ENCODE measurements at regions of chr7 and their contacts with region 1.

Region 1: DNA sequence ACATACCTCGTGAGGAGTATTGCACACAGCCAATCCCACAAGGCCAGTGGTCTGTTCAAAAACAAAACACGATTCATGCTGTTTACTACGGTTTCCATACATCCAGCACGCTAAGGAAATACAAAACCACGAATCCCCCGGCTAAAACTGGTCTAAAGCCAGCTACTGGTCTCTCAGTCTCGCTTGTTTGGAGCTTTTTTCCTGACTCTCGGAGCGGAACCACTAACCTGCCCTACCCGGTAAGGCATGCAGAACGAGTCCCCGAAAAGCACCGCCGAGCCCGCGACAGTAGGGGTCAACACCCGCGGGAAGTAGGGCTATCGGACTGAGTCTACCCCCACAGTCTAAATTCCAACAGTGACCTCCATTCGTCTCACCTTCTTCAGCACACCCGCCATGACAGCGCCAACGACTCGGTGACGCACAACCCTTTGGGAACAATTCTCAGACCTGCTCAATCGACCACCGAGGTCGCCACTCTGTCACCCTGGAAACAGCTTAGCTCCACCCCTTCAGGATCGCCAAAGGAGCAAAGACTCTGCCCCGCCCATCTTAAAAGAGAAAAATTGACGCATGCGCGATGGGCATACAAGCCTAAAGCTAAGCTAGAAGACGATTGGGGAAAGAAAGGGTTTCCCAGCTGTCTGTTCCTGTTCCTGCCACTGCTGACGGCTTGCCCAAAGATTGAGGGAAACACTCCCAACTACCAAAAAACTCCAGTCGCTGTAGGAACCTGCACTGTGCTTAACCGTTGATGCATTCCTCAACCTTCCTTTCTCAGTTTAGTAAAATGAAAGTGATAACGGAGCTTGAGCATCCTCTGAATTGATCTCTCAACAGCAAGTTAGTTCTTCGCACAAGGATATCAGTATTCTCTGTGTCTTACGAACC is at the start of gene NDUFA5:
- DNase-seq: peak; percentile 99
- H3K4me3 ChIP-seq: peak within 1 kb of the TSS; percentile 58
- H3K4me3 Mint-ChIP-seq: no peak within 1 kb of the TSS
- H3K27ac Mint-ChIP-seq: no peak within 1 kb of the TSS
- H3K4me1 ChIP-seq: peaks cover 5% of the 10 kb centered on the region; the same call in 1 of the 2 replicates
- H3K4me1 Mint-ChIP-seq: no peaks in the 10 kb centered on the region
- H3K27me3 ChIP-seq: no peaks in the 10 kb centered on the region
- H3K27me3 Mint-ChIP-seq: peaks cover 3% of the 10 kb centered on the region
- CTCF ChIP-seq: no peak
- total RNA-seq, gene NDUFA5: 87.9 and 88.9 TPM in 2 replicates

Region 2: DNA sequence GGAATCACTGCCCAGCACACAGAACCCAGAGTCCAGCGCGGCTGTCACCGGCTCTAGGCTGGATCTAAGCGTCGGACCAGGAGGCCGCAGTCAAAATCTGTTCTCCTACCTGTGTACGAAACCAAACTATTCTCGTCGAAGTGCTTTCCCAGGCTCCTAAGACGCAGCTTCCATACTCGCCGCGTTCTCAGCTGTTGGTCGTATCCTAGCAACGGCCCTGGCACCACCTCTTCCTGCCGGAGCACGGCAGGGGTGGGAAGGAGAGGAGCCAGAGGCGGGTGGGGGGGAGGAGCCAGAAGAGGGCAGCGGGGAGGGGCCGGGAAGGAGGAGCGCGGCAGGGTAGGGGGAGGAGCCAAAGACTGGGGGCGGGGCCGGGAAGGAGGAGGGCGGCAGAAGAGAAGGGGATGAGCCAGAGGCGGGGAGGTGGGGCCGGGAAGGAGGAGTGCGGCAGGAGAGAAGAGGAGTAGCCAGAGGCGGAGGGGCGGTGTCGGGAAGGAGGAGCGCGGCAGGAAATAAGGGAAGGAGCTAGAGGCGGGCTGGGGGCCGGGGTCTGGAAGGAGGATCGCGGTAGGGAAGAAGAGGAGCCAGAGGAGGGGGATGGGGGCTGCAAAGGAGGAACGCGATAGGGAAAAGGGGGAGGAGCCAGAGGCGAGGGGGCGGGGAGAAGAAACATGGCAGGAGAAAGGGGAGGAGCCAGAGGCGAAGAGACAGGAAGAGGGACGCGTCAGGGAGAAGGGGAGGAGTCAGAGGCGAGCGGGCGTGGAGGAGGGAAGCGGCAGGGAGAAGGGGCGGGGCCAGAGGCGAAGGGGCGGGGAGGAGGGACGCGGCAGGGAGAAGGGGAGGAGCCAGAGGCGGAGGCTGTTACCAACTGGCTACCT is 23.0 kb before region 1 on chr7 and contains the start of gene IQUB:
- CTCF ChIA-PET with region 1: interaction called, 3 read pairs
- POLR2A ChIA-PET with region 1: interaction called, 3 read pairs
- intact Hi-C with region 1: loop called (anchors 1 kb)
- DNase-seq: peak; percentile 97 to 99
- H3K4me3 ChIP-seq: peak within 1 kb of the TSS; percentile 69
- H3K4me3 Mint-ChIP-seq: peak within 1 kb of the TSS; percentile 92
- H3K27ac Mint-ChIP-seq: peak within 1 kb of the TSS; percentile 81
- H3K4me1 ChIP-seq: no peaks in the 10 kb centered on the region
- H3K4me1 Mint-ChIP-seq: no peaks in the 10 kb centered on the region
- H3K27me3 ChIP-seq: no peaks in the 10 kb centered on the region
- H3K27me3 Mint-ChIP-seq: no peaks in the 10 kb centered on the region
- CTCF ChIP-seq: no peak
- total RNA-seq, gene IQUB: 0.35 and 0.39 TPM in 2 replicates